IMR-90 (cell line): ENCODE measurements at regions of chr2 and their contacts with region 1.

Region 1: DNA sequence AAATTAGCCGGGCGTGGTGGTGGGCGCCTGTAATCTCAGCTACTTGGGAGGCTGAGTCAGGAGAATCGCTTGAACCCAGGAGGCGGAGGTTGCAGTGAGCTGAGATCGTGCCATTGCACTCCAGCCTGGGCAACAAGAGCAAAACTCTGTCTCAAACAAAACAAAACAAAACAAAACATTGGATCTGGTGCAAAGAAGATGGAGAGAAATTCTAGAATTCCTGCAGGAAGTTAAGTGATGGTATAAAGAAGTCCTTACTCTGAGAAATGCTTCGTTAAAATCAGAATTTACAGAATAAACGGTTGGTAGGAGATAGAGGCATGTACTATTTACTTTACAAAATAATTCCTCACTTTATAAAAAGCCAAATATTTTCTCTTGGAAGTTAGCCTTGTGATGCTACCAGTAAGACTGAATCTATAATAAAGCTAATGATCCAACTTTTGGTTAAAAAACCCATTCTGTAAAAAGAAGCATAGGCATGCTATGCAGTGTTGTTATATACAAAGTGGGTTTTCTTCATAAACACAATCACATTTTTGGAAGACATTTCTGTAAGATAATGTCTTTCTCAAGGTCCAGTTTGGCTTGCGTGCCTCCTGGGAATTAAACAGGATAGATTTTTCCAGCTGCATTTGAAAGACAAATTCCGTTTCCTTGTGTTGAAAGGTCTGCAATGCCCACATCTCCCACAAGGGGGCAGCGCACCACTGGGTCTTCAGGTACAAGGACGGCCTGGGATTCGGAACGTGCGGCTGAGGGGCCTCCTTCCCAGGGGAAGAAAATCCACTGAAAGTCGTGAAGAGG is 35.6 kb upstream of the PNO1 start:
- DNase-seq: peak; percentile 88
- ATAC-seq: peak; percentile 89
- H3K4me3 ChIP-seq: no peak overlapping the region
- H3K27ac ChIP-seq: no peak overlapping the region
- H3K4me1 ChIP-seq: no peaks in the 10 kb centered on the region; the same call in none of the 2 replicates
- H3K27me3 ChIP-seq: peaks cover 1% of the 10 kb centered on the region; the same call in 1 of the 2 replicates
- CTCF ChIP-seq: peak; percentile 98
- POLR2A ChIP-seq: no peak
- RAD21 ChIP-seq: peak; percentile 96

Region 2: GRCh38 chr2:68141875-68142274 is 19.8 kb after region 1 on chr2:
- CTCF ChIA-PET with region 1: no interaction called
- POLR2A ChIA-PET with region 1: no interaction called
- dilution Hi-C with region 1: no loop called
- in situ Hi-C with region 1: no loop called
- intact Hi-C with region 1: no loop called
- DNase-seq: no peak
- ATAC-seq: no peak
- H3K4me3 ChIP-seq: no peak overlapping the region
- H3K27ac ChIP-seq: no peak overlapping the region
- H3K4me1 ChIP-seq: no peaks in the 10 kb centered on the region
- H3K27me3 ChIP-seq: no peaks in the 10 kb centered on the region
- CTCF ChIP-seq: no peak
- POLR2A ChIP-seq: no peak
- RAD21 ChIP-seq: no peak

Region 3: GRCh38 chr2:68157402-68158133 is 35.5 kb after region 1 on chr2 and contains the start of gene PNO1:
- CTCF ChIA-PET with region 1: interaction called, 6 read pairs
- POLR2A ChIA-PET with region 1: no interaction called
- dilution Hi-C with region 1: no loop called
- in situ Hi-C with region 1: no loop called
- intact Hi-C with region 1: loop called (anchors 5 kb)
- DNase-seq: peak; percentile 95
- ATAC-seq: peak; percentile 98
- H3K4me3 ChIP-seq: peak within 1 kb of the TSS; percentile 75
- H3K27ac ChIP-seq: peak within 1 kb of the TSS; percentile 89
- H3K4me1 ChIP-seq: no peaks in the 10 kb centered on the region
- H3K27me3 ChIP-seq: no peaks in the 10 kb centered on the region
- CTCF ChIP-seq: no peak
- POLR2A ChIP-seq: peak; percentile 91
- RAD21 ChIP-seq: peak; percentile 11; the same call in 1 of the 2 replicates
- total RNA-seq, gene PNO1: 14.7 and 25.8 TPM in 2 replicates

Region 4: GRCh38 chr2:68244456-68244855 is 122.4 kb after region 1 on chr2:
- CTCF ChIA-PET with region 1: interaction called, 6 read pairs
- POLR2A ChIA-PET with region 1: no interaction called
- dilution Hi-C with region 1: no loop called
- in situ Hi-C with region 1: no loop called
- intact Hi-C with region 1: loop called (anchors 1 kb)
- DNase-seq: no peak
- ATAC-seq: 0 out of 2 replicates have a peak, but pooled peaks have one; percentile 11
- H3K4me3 ChIP-seq: no peak overlapping the region
- H3K27ac ChIP-seq: no peak overlapping the region
- H3K4me1 ChIP-seq: peaks cover 21% of the 10 kb centered on the region
- H3K27me3 ChIP-seq: no peaks in the 10 kb centered on the region
- CTCF ChIP-seq: peak; percentile 33; the same call in 1 of the 2 replicates
- POLR2A ChIP-seq: no peak
- RAD21 ChIP-seq: no peak

Region 5: DNA sequence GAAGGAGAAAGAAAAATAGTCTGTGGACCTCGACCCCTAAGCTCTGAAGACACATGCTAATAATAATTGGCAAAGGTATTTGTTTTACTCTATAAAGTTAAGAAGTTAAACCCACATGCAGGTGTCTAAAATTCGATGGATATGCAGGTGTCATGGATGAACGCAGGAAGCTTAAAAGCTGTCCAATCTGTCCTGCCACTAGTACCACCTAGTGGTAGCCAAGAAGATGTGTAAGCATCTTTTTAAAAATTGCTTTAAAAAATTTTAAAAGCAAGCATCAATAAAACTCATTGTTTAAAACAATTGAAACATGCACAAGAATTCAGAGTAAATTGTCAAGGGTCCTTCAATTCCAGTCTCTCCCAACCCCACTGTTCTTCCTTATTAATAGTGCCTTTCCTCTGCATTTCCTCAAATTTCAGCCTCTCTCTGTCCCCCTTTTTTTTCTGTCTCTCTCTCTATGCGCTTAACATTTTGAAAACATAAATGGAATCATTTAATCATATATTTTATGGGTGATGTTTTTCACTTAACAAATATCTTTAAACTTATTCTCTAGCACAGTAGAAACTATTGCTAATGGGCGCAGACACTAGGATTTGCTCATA is 160.8 kb after region 1 on chr2:
- CTCF ChIA-PET with region 1: interaction called, 23 read pairs
- POLR2A ChIA-PET with region 1: no interaction called
- dilution Hi-C with region 1: no loop called
- in situ Hi-C with region 1: loop called (anchors 5 kb)
- intact Hi-C with region 1: loop called (anchors 1 kb)
- DNase-seq: peak; percentile 61
- ATAC-seq: peak; percentile 74
- H3K4me3 ChIP-seq: no peak overlapping the region
- H3K27ac ChIP-seq: no peak overlapping the region
- H3K4me1 ChIP-seq: no peaks in the 10 kb centered on the region; the same call in 1 of the 2 replicates
- H3K27me3 ChIP-seq: no peaks in the 10 kb centered on the region
- CTCF ChIP-seq: peak; percentile 83
- POLR2A ChIP-seq: no peak
- RAD21 ChIP-seq: peak; percentile 87

Region 6: GRCh38 chr2:68362069-68362468 is 240.0 kb after region 1 on chr2:
- CTCF ChIA-PET with region 1: interaction called, 3 read pairs
- POLR2A ChIA-PET with region 1: no interaction called
- dilution Hi-C with region 1: no loop called
- in situ Hi-C with region 1: no loop called
- intact Hi-C with region 1: loop called (anchors 5 kb)
- DNase-seq: peak; percentile 50
- ATAC-seq: peak; percentile 73
- H3K4me3 ChIP-seq: no peak overlapping the region
- H3K27ac ChIP-seq: no peak overlapping the region
- H3K4me1 ChIP-seq: no peaks in the 10 kb centered on the region
- H3K27me3 ChIP-seq: peaks cover 3% of the 10 kb centered on the region; the same call in 1 of the 2 replicates
- CTCF ChIP-seq: peak; percentile 69
- POLR2A ChIP-seq: no peak
- RAD21 ChIP-seq: peak; percentile 51